Activated CD4-positive, alpha-beta memory T cell treated with anti-CD3 and anti-CD28 coated beads, Interleukin-2, amount 10 ng/mL, durations not matched to agents 7 days and 5 days (primary cell): ENCODE measurements at regions of chr9 and their contacts with region 1.

Region 1: DNA sequence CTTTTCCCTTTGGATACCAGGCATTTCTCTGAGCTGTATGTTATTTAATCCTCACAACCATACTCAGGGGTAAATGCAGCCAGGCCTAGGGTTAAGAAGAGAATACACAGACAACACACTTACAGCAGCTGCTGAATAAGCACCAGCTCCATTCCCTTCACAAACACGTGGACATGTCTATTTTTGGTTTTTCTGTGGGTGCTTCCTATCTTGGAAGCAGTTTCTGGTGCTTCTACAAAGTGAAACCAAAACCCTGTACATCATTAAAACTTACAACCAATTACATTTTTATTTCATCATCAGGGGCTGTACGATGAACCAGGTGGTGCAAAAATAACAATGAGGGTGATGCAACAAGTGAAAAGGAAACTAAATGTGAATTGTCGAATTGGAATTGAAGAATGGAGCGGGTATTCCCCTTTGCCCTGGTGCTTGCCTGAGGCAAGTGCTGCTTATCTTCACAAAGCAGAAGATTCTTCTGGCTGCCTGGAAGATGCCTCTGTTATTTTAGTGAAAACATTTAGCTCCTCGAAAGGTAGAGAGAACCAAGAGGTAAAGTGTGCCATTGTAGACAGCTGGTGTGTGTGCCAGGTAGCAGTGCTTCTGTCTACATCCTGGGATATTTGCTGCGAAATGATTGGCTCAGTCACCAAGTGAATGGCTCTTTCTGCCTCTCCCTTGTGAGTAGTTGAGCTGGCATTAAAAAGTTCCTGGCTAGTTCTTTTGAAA is 18.6 kb upstream of the IFNB1 start:
- DNase-seq: peak; percentile 39
- H3K4me3 Mint-ChIP-seq: peak overlapping the region; percentile 68
- H3K27ac Mint-ChIP-seq: peak overlapping the region; percentile 74
- H3K4me1 Mint-ChIP-seq: peaks cover 31% of the 10 kb centered on the region
- H3K27me3 Mint-ChIP-seq: no peaks in the 10 kb centered on the region

Region 2: GRCh38 chr9:21031091-21031807 is 65.1 kb before region 1 on chr9 and contains the start of gene HACD4:
- CTCF ChIA-PET with region 1: no interaction called
- POLR2A ChIA-PET with region 1: interaction called, 12 read pairs
- DNase-seq: peak; percentile 79
- H3K4me3 Mint-ChIP-seq: peak within 1 kb of the TSS; percentile 47
- H3K27ac Mint-ChIP-seq: peak within 1 kb of the TSS; percentile 78
- H3K4me1 Mint-ChIP-seq: peaks cover 25% of the 10 kb centered on the region
- H3K27me3 Mint-ChIP-seq: no peaks in the 10 kb centered on the region
- total RNA-seq, gene HACD4: 14.8 to 15.6 TPM

Region 3: GRCh38 chr9:21078717-21079116 is 17.6 kb before region 1 on chr9:
- CTCF ChIA-PET with region 1: interaction called, 11 read pairs
- POLR2A ChIA-PET with region 1: no interaction called
- DNase-seq: no peak
- H3K4me3 Mint-ChIP-seq: no peak overlapping the region
- H3K27ac Mint-ChIP-seq: no peak overlapping the region
- H3K4me1 Mint-ChIP-seq: peaks cover 26% of the 10 kb centered on the region
- H3K27me3 Mint-ChIP-seq: peaks cover 5% of the 10 kb centered on the region